Activated CD4-positive, alpha-beta T cell treated with anti-CD3 and anti-CD28 coated beads, Interleukin-2, amount 10 ng/mL, durations not matched to agents 24 days and 14 days (primary cell): ENCODE measurements at regions of chr3 and their contacts with region 1.

Region 1: GRCh38 chr3:167587651-167588050 is 66.1 kb downstream of the WDR49 start:
- DNase-seq: no peak
- H3K4me3 Mint-ChIP-seq: no peak overlapping the region
- H3K27ac Mint-ChIP-seq: no peak overlapping the region
- H3K4me1 Mint-ChIP-seq: no peaks in the 10 kb centered on the region
- H3K27me3 Mint-ChIP-seq: no peaks in the 10 kb centered on the region

Region 2: DNA sequence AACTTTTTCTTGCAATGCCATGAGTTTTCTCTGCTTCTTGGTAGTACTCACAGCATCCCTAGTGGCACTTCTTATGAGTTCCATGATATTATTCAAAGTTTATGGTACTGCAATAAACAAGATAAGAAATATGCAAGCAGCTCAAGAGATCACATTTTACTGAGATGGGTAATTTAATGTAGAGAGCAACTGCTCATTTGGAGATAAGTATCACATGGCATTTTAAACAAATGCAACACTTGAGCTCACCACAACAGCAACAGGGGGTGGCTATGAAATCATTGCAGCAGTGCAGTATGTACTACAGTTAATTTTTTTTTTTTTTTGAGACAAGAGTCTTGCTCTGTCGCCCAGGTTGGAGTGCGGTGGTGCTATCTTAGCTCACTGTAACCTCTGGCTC is 19.0 kb before region 1 on chr3:
- intact Hi-C with region 1: loop called (anchors 1 kb)
- DNase-seq: no peak
- H3K4me3 Mint-ChIP-seq: no peak overlapping the region
- H3K27ac Mint-ChIP-seq: no peak overlapping the region
- H3K4me1 Mint-ChIP-seq: no peaks in the 10 kb centered on the region
- H3K27me3 Mint-ChIP-seq: no peaks in the 10 kb centered on the region